OCI-LY7 (cell line): ENCODE measurements at regions of chr13 and their contacts with region 1.

Region 1: GRCh38 chr13:98484289-98485219 is 92.4 kb downstream of the STK24 start:
- DNase-seq: no peak
- H3K4me3 ChIP-seq: no peak overlapping the region
- H3K27ac ChIP-seq: no peak overlapping the region
- H3K4me1 ChIP-seq: peaks cover 47% of the 10 kb centered on the region
- CTCF ChIP-seq: no peak

Region 2: DNA sequence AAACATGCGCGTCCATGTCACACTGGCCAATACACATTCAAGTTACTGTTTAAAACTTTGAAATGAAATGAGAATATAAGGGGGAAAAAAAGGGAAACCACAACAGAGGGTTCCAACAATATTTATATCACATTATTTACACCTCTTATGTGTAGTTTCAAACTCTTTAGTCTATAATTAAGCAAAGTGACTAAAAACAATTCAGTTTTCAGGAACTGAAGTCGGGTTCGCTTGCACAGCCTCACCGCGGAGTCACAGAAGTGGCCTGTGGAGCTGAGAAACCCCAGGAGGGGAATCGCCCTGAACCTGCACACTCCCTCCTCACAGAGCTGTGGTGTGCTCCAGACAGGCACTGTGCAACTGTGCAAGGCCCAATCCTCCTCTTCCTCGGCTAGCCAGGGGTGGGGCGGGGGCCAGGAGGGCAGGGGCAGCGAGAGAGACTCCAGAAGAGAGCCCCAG is 16.4 kb after region 1 on chr13:
- CTCF ChIA-PET with region 1: no interaction called
- POLR2A ChIA-PET with region 1: no interaction called
- intact Hi-C with region 1: no loop called
- DNase-seq: no peak
- H3K4me3 ChIP-seq: no peak overlapping the region
- H3K27ac ChIP-seq: no peak overlapping the region
- H3K4me1 ChIP-seq: no peaks in the 10 kb centered on the region
- CTCF ChIP-seq: no peak

Region 3: GRCh38 chr13:98570929-98571372 is 86.4 kb after region 1 on chr13:
- CTCF ChIA-PET with region 1: no interaction called
- POLR2A ChIA-PET with region 1: interaction called, 16 read pairs
- intact Hi-C with region 1: loop called (anchors 2 kb)
- DNase-seq: peak; percentile 87
- H3K4me3 ChIP-seq: peak overlapping the region; percentile 68
- H3K27ac ChIP-seq: peak overlapping the region; percentile 99
- H3K4me1 ChIP-seq: peaks cover 81% of the 10 kb centered on the region
- CTCF ChIP-seq: no peak

Region 4: DNA sequence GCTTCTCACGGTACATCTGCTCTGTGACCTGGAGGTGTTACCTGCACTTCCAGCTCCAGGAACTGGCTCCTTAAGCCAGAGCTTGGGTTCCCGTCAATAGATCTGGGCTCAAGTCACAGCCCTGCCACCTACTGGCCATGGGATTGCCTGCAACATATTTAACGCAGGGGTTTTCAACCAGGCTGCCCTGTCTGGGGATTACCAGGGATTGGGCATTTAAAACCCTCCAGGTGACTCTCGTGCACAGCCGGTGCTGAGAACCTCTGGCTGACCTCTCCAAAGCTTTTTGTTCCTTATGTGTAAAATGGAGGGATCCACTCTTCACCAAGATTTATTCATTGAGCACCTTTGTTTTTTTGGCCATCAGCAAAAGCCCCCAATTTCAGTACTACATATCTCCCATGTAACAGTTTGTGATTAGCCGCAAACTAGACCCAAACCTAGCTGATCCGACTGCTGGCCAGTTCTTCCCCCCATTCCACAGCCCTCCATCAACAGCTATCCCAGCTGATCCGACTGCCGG is 169.0 kb after region 1 on chr13:
- CTCF ChIA-PET with region 1: no interaction called
- POLR2A ChIA-PET with region 1: interaction called, 3 read pairs
- intact Hi-C with region 1: loop called (anchors 1 kb)
- DNase-seq: peak; percentile 67
- H3K4me3 ChIP-seq: no peak overlapping the region
- H3K27ac ChIP-seq: no peak overlapping the region
- H3K4me1 ChIP-seq: no peaks in the 10 kb centered on the region
- CTCF ChIP-seq: peak; percentile 78